ENCODE measurements at regions of chr20 and their contacts with region 1.

Region 1: GRCh38 chr20:21102603-21103311 is 3.4 kb downstream of the LINC00237 start:
- DNase-seq: no peak
- H3K4me3 ChIP-seq: no peak overlapping the region
- H3K27ac ChIP-seq: no peak overlapping the region
- H3K4me1 ChIP-seq: no peaks in the 10 kb centered on the region
- H3K27me3 ChIP-seq: peaks cover 64% of the 10 kb centered on the region
- CTCF ChIP-seq: no peak

Region 2: GRCh38 chr20:19880256-19881079 is 1222.3 kb before region 1 on chr20:
- CTCF ChIA-PET with region 1: no interaction called
- POLR2A ChIA-PET with region 1: no interaction called
- intact Hi-C with region 1: no loop called
- DNase-seq: peak; percentile 54 to 94
- H3K4me3 ChIP-seq: peak overlapping the region; percentile 38; the same call in 1 of the 2 replicates
- H3K27ac ChIP-seq: peak overlapping the region; percentile 96
- H3K4me1 ChIP-seq: peaks cover 58% of the 10 kb centered on the region
- H3K27me3 ChIP-seq: no peaks in the 10 kb centered on the region
- CTCF ChIP-seq: no peak

Region 3: GRCh38 chr20:21125849-21126580 is 23.3 kb after region 1 on chr20 and contains the start of gene KIZ:
- CTCF ChIA-PET with region 1: no interaction called
- POLR2A ChIA-PET with region 1: interaction called, 10 read pairs
- intact Hi-C with region 1: no loop called
- DNase-seq: peak; percentile 78 to 99
- H3K4me3 ChIP-seq: peak within 1 kb of the TSS; percentile 83
- H3K27ac ChIP-seq: no peak within 1 kb of the TSS
- H3K4me1 ChIP-seq: peaks cover 11% of the 10 kb centered on the region
- H3K27me3 ChIP-seq: no peaks in the 10 kb centered on the region
- CTCF ChIP-seq: peak; percentile 33; the same call in 1 of the 2 replicates
- total RNA-seq, gene KIZ: 17.2 and 21.5 TPM in 2 replicates